AG04449 (cell line): ENCODE measurements at regions of chr6 and their contacts with region 1.

Region 1: DNA sequence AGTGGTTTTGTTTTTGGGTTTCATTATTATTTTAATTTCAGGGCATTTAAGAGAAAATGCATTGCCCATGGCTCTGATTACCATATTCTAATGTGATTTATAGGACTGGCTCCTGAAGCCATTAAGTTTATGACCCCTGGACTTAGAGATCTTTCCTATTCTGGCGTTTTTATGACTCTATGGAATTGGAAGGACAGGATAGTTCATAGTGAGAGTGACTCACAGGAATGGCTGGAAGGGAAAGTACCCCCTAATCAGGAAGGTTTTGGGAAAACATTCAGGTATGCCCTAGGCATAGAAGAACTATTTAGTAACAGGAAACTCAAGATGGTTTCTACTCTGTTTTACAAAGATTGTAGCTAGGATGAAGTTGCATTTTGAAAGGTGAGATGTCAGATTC is 108.6 kb upstream of the SLC2A12 start:
- DNase-seq: no peak
- H3K4me3 ChIP-seq: no peak overlapping the region
- CTCF ChIP-seq: no peak

Region 2: GRCh38 chr6:134138226-134138975 is 22.6 kb before region 1 on chr6:
- CTCF ChIA-PET with region 1: interaction called, 10 read pairs
- POLR2A ChIA-PET with region 1: no interaction called
- DNase-seq: no peak
- H3K4me3 ChIP-seq: no peak overlapping the region
- CTCF ChIP-seq: no peak

Region 3: DNA sequence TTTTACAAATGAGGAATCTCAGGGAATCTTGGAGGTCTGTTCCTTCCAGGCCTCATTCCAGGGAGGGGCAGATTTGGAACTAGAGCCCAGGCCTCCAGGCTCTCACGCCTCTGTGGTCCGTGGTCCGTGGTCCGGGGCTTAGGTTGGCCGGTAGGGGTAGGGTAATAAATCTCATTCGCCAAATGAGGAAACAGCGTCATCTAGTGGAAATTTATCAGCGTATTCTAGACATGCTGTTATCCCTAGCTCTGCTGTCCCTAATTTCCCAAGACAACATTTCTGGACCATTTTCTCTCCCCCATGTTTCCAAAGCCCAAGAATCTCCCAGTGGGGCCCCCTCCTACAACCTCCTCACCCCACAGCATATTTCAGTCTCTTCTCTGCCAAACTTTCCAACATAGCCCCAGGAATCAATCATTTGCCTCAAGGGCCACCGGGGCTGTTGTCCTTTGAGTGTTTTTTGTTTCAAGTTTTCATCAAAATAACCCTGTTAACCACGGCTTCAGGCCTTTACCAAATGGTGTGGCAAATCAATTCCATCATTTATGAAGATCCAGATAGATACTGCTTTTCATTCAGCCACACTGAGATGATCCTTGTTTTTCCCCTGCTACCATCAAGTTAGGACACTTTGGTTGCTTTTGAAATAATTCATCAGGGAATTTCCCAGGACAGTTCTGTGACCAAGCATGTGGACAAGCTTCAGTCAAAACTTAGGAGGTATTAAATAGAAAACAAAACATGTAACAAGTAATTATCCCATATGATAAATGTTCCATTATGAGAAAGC is 662.1 kb after region 1 on chr6:
- CTCF ChIA-PET with region 1: interaction called, 62 read pairs
- POLR2A ChIA-PET with region 1: no interaction called
- DNase-seq: no peak
- H3K4me3 ChIP-seq: no peak overlapping the region
- CTCF ChIP-seq: peak; percentile 79

Region 4: GRCh38 chr6:134888316-134888715 is 727.3 kb after region 1 on chr6:
- CTCF ChIA-PET with region 1: interaction called, 98 read pairs
- POLR2A ChIA-PET with region 1: no interaction called
- DNase-seq: no peak
- H3K4me3 ChIP-seq: no peak overlapping the region
- CTCF ChIP-seq: no peak